Left colon (tissue), 2 donors: ENCODE measurements at regions of chr19 and their contacts with region 1.

Region 1: GRCh38 chr19:51417107-51417809 is at the start of gene SIGLEC10:
- DNase-seq: peak in 1 of 2 donors; percentile 44
- ATAC-seq: peak; percentile 24
- total RNA-seq, gene SIGLEC10: 1.3 to 4.5 TPM

Region 2: GRCh38 chr19:51327066-51328001 is 89.9 kb before region 1 on chr19:
- intact Hi-C with region 1: loop called in 1 of 2 experiments (anchors 10 kb)
- DNase-seq: peak in 1 of 2 donors; percentile 55
- ATAC-seq: peak; percentile 86